ENCODE measurements at regions of chr6 and their contacts with region 1.

Region 1: DNA sequence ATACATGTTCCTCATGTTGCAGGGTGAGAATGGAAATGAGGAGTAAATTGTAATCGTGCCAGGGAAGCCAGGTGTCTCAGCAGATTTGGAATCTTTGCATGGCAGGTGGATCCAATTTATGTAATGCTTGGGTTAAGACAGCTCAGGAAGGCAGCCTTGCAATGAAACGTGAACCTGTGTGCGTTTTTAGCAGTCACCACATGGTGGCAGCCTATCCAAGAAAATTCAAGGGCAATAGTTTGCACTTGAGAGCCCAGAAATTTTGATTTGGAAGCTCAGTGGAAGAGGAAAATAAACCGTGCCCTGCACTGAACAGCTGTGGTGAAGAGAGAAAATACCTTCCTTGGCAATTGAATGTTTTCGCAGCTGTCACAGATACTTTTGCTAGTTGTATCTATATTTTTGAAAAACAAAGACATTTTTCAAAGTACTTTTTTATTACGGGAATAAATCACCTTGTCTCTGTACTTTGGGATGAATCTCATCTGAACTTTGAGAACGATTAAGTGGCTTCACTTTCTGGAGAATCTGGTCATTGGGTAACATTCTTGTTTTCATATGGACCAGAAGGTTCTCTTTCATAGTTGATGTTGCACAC is 26.5 kb downstream of the MTHFD1L start:
- DNase-seq: peak; percentile 68
- ATAC-seq: peak; percentile 75
- H3K4me3 Mint-ChIP-seq: no peak overlapping the region
- H3K27ac Mint-ChIP-seq: no peak overlapping the region
- H3K4me1 Mint-ChIP-seq: peaks cover 31% of the 10 kb centered on the region
- H3K27me3 Mint-ChIP-seq: no peaks in the 10 kb centered on the region
- CTCF ChIP-seq: peak; percentile 83

Region 2: DNA sequence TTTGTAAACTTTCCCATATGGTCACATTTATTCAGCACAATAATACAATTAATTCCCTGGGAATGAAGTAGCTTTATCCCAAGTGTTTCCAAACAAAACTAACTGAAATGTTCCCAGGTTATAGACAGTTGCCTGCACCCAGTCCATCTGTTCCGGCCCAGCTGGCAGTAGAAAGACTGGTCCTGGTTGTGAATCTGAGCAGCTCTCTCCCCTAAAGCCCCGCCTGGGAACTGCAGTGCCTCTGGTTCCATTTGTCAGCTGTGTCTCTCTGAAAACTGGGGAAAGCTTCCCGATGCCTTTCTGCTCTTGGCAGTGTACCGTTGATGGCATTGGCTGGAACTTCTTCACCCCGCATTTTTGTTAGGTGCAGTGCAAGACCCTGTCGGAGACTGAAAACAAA is 17.8 kb before region 1 on chr6:
- CTCF ChIA-PET with region 1: interaction called, 11 read pairs
- POLR2A ChIA-PET with region 1: interaction called, 4 read pairs
- intact Hi-C with region 1: no loop called
- DNase-seq: no peak
- ATAC-seq: no peak
- H3K4me3 Mint-ChIP-seq: no peak overlapping the region
- H3K27ac Mint-ChIP-seq: no peak overlapping the region
- H3K4me1 Mint-ChIP-seq: peaks cover 13% of the 10 kb centered on the region
- H3K27me3 Mint-ChIP-seq: no peaks in the 10 kb centered on the region
- CTCF ChIP-seq: no peak

Region 3: GRCh38 chr6:150905769-150906506 is 14.0 kb after region 1 on chr6:
- CTCF ChIA-PET with region 1: interaction called, 32 read pairs
- POLR2A ChIA-PET with region 1: no interaction called
- intact Hi-C with region 1: no loop called
- DNase-seq: peak; percentile 4
- ATAC-seq: no peak
- H3K4me3 Mint-ChIP-seq: no peak overlapping the region
- H3K27ac Mint-ChIP-seq: no peak overlapping the region
- H3K4me1 Mint-ChIP-seq: no peaks in the 10 kb centered on the region
- H3K27me3 Mint-ChIP-seq: no peaks in the 10 kb centered on the region
- CTCF ChIP-seq: no peak

Region 4: GRCh38 chr6:151121900-151122299 is 229.9 kb after region 1 on chr6:
- CTCF ChIA-PET with region 1: no interaction called
- POLR2A ChIA-PET with region 1: no interaction called
- intact Hi-C with region 1: no loop called
- DNase-seq: no peak
- ATAC-seq: no peak
- H3K4me3 Mint-ChIP-seq: no peak overlapping the region
- H3K27ac Mint-ChIP-seq: no peak overlapping the region
- H3K4me1 Mint-ChIP-seq: no peaks in the 10 kb centered on the region
- H3K27me3 Mint-ChIP-seq: peaks cover 1% of the 10 kb centered on the region
- CTCF ChIP-seq: no peak

Region 5: DNA sequence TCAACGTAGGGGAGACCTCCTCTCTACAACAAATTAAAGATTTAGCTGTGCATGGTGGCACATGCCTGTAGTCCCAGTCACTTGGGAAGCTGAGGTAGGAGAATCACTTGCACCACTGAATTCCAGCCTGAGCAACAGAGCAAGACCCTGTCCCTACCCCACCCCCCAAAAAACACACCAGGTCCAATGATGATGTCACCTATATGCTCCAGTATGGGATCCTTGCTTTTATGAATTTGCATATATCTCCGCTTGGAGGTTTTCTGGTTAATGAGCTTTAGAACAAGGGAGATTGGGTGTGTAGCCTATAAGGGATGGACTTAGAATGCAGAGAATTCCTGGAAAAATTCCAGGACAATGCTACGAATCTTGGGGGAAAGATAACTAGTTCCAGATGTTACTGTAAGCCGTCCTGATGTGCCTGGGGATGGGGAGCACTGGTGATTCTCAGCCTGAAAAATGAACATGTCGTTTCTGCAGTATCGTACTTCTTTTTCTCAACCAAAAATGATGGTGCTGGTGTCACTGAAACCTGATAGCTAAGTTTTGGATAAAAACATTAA is 438.2 kb after region 1 on chr6:
- CTCF ChIA-PET with region 1: interaction called, 65 read pairs
- POLR2A ChIA-PET with region 1: interaction called, 4 read pairs
- intact Hi-C with region 1: loop called (anchors 2 kb)
- DNase-seq: no peak
- ATAC-seq: no peak
- H3K4me3 Mint-ChIP-seq: no peak overlapping the region
- H3K27ac Mint-ChIP-seq: no peak overlapping the region
- H3K4me1 Mint-ChIP-seq: peaks cover 8% of the 10 kb centered on the region
- H3K27me3 Mint-ChIP-seq: peaks cover 25% of the 10 kb centered on the region
- CTCF ChIP-seq: no peak

Region 6: DNA sequence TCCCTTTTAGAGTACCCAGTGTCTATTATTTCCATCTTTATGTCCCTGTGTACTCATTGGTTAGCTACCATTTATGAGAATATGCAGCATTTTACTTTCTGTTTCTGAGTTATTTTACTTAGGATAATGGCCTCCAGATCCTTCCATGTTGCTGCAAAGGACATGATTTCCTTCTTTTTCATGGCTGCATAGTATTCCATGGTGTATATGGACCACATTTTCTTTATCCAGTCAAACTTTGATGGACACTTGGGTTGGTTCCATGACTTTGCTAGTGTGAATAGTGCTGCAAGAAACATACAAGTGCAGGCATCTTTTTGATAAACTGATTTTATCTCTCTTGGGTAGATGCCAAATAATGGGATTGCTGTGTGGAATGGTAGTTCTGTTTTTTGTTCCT is 443.9 kb after region 1 on chr6:
- CTCF ChIA-PET with region 1: interaction called, 14 read pairs
- POLR2A ChIA-PET with region 1: no interaction called
- intact Hi-C with region 1: loop called (anchors 2 kb)
- DNase-seq: no peak
- ATAC-seq: no peak
- H3K4me3 Mint-ChIP-seq: no peak overlapping the region
- H3K27ac Mint-ChIP-seq: no peak overlapping the region
- H3K4me1 Mint-ChIP-seq: no peaks in the 10 kb centered on the region
- H3K27me3 Mint-ChIP-seq: peaks cover 2% of the 10 kb centered on the region
- CTCF ChIP-seq: no peak